Left ventricle myocardium inferior (tissue), 1 donor: ENCODE measurements at regions of chr1 and their contacts with region 1.

Region 1: DNA sequence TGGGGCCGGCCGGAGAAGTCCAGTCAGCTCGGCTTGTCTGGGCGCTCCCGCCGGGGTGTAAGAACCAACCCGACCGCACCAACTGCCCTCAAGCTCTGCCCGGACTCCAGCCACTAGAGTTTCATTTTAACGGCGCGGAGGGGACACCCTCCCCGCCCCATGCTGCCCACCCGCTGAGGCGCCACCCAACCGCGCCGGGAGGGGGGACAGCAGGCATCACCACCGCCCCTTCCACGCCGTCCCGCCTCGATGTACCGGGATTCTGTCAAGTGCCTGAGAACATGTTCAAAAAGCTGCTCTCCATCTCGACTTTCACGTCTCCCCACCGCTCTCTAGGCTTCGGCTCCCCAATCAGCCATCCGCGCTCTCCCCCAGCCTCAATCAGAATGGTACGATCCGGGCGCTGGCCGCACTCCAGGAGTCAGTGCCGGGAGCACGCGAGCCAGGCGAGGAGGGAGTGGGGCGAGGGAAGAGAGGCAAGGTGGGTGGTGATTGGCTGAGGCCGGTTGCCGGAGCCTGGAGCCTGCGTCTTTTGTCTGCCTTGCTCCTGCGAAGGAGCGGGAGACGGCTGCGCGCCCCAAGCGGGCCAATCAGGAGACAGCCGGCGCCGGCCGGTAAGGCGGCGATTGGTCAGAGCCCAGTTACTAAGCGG is at the start of gene PIK3R3:
- DNase-seq: peak; percentile 98
- H3K4me3 ChIP-seq: peak within 1 kb of the TSS; percentile 84
- H3K27ac ChIP-seq: peak within 1 kb of the TSS; percentile 97
- H3K4me1 ChIP-seq: peaks cover 90% of the 10 kb centered on the region
- H3K27me3 ChIP-seq: peaks cover 16% of the 10 kb centered on the region
- CTCF ChIP-seq: peak; percentile 37
- total RNA-seq, gene PIK3R3: 32.7 TPM

Region 2: DNA sequence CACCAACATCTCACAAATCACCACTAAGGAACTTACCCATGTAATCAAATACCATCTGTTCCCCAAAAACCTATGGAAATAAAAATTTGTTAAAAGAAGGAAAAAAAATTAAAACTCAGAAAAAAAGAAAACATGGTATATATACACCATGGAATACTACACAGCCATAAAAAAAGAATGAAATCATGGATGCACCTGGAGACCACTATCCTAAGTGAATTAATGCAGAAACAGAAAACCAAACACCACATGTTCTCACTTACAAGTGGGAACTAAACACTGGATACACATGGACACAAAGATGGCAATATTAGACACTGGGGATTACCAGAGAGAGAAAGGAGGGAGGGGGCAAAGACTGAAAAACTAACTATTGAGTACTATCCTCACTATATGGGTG is 976.7 kb before region 1 on chr1:
- intact Hi-C with region 1: no loop called
- DNase-seq: no peak
- H3K4me3 ChIP-seq: no peak overlapping the region
- H3K27ac ChIP-seq: no peak overlapping the region
- H3K4me1 ChIP-seq: no peaks in the 10 kb centered on the region
- H3K27me3 ChIP-seq: no peaks in the 10 kb centered on the region
- CTCF ChIP-seq: no peak

Region 3: GRCh38 chr1:45843474-45843905 is 289.2 kb before region 1 on chr1:
- intact Hi-C with region 1: no loop called
- DNase-seq: no peak
- H3K4me3 ChIP-seq: no peak overlapping the region
- H3K27ac ChIP-seq: no peak overlapping the region
- H3K4me1 ChIP-seq: peaks cover 17% of the 10 kb centered on the region
- H3K27me3 ChIP-seq: no peaks in the 10 kb centered on the region
- CTCF ChIP-seq: peak; percentile 27

Region 4: DNA sequence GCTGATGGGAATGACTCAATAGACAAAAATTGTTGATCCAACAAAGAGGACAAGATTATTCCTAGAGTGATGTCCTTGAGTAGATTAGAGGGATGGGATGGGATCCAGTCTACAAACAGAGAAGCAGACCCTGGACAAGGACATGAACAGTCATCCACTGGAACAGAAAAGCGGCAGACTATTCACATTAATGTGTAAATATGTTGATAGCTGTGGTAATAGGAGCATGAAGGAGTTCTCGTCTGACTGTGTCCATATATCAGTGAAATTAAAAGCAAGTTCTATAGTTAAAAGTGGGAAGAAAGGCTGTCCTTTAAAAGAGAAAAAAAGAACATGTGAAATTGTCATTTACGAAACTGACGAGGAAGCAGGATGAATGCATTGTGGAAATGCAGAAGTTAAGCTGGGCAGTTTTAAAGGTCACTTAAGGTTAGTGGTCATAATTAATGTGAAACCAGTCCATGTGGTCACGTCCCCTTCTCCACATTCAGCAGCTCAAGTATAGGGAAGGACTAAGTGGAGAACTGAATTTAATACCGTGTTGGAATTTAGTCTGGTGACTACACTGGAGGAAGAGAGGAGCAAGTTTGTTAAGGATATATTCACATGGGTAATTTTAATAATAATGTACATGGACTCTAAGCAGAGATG is 62.4 kb before region 1 on chr1:
- intact Hi-C with region 1: loop called (anchors 10 kb)
- DNase-seq: no peak
- H3K4me3 ChIP-seq: no peak overlapping the region
- H3K27ac ChIP-seq: no peak overlapping the region
- H3K4me1 ChIP-seq: peaks cover 14% of the 10 kb centered on the region
- H3K27me3 ChIP-seq: no peaks in the 10 kb centered on the region
- CTCF ChIP-seq: no peak

Region 5: DNA sequence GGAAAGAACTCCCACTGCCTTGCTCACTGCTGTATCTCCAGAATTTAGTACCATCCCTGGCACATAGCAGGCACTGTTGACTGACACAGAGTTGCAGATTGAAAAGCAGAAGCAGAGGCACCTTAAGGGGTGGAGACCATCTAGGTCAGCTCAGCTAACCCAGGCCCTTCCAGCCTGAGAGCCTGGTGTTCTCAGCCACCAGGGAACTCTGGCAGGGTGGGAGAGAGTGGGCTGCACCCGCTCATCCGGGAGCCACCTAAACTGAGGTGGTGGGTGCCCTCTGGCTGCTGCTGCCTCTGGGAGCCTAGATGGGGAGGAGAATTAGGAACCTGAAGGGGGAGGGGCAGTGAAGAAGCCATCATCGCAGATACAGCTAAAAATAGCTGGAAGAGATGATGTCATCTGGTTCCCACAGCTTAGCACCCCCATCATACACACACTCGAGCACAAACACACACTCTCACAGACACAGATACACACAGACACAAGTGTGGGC is 40.8 kb after region 1 on chr1:
- intact Hi-C with region 1: loop called (anchors 5 kb)
- DNase-seq: no peak
- H3K4me3 ChIP-seq: peak overlapping the region; percentile 12
- H3K27ac ChIP-seq: peak overlapping the region; percentile 80
- H3K4me1 ChIP-seq: peaks cover 70% of the 10 kb centered on the region
- H3K27me3 ChIP-seq: no peaks in the 10 kb centered on the region
- CTCF ChIP-seq: no peak